Ascending aorta (tissue), 2 donors: ENCODE measurements at regions of chr6 and their contacts with region 1.

Region 1: DNA sequence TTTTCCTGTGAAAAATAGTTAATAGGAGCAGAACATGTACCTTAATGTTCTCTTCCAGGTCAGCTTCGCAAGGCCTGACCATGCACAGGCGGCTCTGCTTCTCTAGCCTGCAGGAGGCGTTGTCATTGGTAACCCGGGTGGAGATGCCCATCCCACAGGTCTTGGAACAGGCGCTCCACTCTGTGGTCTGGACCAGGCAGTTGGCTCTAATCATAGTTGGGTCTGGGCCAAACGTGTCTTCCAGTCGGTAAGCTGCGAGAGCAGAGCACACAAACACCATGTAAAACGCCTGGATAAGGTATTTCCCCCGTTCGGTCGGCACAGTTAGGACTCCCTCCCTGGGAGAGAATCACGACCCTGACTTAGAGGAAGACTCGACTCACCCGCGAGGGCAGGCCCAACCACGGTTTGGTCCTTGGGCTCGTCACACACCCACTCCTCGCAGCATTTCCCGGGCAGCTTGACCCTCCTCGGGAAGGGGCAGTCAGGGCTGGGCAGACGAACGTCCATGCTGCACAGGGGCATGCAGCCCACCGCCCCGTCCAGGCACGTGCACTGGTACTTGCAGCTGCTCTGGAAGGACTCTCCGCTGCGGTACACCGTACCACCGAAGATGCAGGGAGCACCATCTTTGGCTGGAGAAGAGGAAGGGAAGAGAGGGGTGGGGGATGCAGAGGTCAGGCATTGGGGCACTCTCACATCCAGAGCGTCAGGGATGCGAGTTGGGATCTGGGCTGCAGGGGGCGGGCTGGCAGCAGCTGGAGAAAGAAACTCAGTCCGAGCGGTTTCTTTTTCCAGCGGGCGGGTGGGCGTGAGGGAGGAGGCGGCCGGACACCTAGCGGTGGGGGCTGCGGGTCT is 1.0 kb downstream of the CCN2 start:
- DNase-seq: peak; percentile 14 to 85
- H3K4me3 ChIP-seq: peak overlapping the region; percentile 84 to 86
- H3K27ac ChIP-seq: peak overlapping the region; percentile 92 to 94
- H3K4me1 ChIP-seq: peaks cover 3 to 23% of the 10 kb centered on the region in 2 donors
- H3K27me3 ChIP-seq: no peaks in the 10 kb centered on the region
- CTCF ChIP-seq: peak; percentile 37 to 58 (median 46)

Region 2: DNA sequence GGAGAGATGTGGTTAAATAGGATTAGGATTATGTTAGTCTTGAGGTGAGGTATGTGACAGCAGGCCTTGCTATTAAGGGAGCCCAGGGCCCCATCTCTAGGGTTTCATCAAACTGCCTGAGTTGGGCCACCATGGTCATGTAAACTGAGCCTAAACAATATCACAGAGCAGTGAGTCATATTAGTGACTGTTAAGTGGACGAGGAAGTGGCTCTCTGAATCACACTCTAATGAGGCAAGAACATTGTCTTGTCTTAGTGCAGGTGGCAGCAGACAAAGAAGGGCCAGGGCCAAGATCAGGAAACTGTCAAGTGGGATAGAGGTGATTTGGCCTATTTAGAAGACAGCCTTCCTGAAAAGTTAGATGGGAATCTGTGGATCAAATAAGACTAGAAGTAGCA is 289.9 kb before region 1 on chr6:
- intact Hi-C with region 1: no loop called
- DNase-seq: no peak
- H3K4me3 ChIP-seq: no peak overlapping the region
- H3K27ac ChIP-seq: no peak overlapping the region
- H3K4me1 ChIP-seq: no peaks in the 10 kb centered on the region
- H3K27me3 ChIP-seq: no peaks in the 10 kb centered on the region
- CTCF ChIP-seq: no peak

Region 3: GRCh38 chr6:131995917-131996316 is 45.8 kb after region 1 on chr6:
- intact Hi-C with region 1: loop called (anchors 5 kb)
- DNase-seq: no peak
- H3K4me3 ChIP-seq: no peak overlapping the region
- H3K27ac ChIP-seq: no peak overlapping the region
- H3K4me1 ChIP-seq: peaks cover 0 to 12% of the 10 kb centered on the region in 2 donors
- H3K27me3 ChIP-seq: no peaks in the 10 kb centered on the region
- CTCF ChIP-seq: no peak

Region 4: DNA sequence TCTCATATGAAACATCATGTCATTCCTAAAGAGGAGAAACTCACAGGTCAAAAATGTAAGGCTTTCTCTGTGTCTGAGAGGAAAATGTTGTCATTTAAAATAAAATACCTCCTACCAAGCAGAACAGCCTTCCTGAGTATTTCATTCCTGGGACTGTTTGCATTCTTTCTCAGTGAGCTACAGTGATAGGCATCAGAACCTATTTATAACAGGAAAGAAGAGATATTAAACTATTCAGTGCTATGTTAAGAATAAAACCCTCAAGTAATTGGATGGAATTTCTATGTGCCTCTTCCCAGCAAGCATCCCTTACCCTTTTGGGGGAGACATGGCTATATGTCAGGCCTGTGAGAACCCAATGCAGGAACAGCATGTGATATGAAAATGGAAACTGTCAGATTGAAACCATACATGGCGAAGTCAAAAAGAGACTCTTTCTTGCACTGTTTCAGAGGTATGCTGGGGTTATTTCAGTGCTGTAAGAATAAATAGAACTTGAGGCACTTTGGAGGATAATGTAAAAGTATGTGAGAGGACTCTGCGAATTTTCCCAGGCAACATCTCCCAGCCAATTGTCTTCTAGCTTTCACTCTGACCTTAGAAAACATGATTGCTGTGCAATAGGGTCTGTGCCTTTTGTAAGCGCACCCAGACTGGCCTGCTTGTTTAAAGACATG is 134.8 kb after region 1 on chr6:
- intact Hi-C with region 1: loop called (anchors 2 kb)
- DNase-seq: no peak
- H3K4me3 ChIP-seq: peak overlapping the region in 1 of 2 donors; percentile 29
- H3K27ac ChIP-seq: peak overlapping the region; percentile 93 to 95
- H3K4me1 ChIP-seq: peaks cover 6 to 23% of the 10 kb centered on the region in 2 donors
- H3K27me3 ChIP-seq: no peaks in the 10 kb centered on the region
- CTCF ChIP-seq: no peak

Region 5: DNA sequence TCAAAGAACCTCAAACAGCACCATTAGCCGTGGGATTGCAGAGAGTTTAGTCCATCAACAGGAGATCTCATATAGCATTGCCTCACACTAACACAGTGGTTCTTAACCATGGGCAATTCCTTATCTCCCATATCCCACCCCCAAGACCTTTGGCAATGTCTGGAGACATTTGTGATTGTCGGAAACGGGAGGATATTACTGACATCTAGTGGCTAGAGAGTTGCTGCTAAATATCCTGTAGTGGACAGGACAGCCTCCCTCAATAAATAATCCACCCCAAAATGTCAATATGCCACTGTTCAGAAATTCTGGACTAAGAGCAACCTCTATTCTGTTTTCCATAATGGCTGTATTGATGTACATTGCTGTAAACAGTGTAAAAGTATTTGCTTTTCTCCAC is 211.1 kb after region 1 on chr6:
- intact Hi-C with region 1: loop called (anchors 5 kb)
- DNase-seq: no peak
- H3K4me3 ChIP-seq: no peak overlapping the region
- H3K27ac ChIP-seq: no peak overlapping the region
- H3K4me1 ChIP-seq: no peaks in the 10 kb centered on the region
- H3K27me3 ChIP-seq: no peaks in the 10 kb centered on the region
- CTCF ChIP-seq: peak; percentile 44 to 56 (median 44)